AG04450 (cell line): ENCODE measurements at regions of chr1 and their contacts with region 1.

Region 1: DNA sequence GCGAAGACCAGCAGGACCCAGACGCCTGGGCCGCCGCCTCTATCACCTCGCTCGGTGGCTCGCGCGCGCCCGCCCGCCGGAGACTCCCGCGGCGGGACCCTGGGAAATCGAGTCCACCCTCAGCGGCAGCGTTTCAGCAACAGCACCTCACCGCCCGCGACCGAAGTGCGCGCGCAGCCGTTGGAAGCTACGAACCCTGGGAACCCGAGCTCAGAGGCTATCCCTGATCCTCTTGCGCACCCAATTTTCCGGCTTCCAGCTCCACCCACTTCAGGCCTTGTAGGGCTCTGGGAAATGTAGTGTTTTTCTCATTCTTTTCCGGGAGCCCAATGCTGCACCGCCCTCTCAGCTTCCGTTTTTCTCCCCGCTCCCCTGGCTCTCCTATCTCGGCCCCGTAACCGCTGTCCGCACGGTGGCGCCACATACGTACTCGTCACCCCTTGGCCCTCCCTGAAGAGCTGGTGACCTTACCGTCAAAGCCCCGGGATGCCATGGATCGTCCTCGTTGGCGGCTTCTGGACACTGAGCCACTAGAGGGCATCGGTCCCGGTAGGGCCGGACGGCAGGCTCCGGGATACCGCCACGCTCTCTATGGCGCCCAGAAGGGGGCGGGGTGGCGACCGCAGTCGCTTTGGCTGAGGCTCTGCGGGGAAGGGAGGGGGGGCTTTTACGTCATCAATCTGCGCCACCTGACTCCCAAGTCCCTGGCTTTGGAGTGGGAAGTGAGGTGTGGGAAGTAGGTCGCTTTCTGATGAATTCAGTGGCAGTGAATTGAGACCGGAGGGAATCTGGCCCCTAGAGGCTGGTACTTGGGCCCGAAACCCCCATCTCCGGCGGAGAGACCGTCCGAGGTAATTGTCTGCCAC is at the starts of genes ODR4 and TPR:
- DNase-seq: peak; percentile 99
- H3K4me3 ChIP-seq: peak within 1 kb of the TSS; percentile 86
- H3K27ac ChIP-seq: peak within 1 kb of the TSS; percentile 99
- H3K27me3 ChIP-seq: no peaks in the 10 kb centered on the region
- CTCF ChIP-seq: peak; percentile 89
- polyA plus RNA-seq, gene ODR4: 9.7 and 16.8 TPM in 2 replicates
- polyA plus RNA-seq, gene TPR: 47.6 and 48.5 TPM in 2 replicates

Region 2: GRCh38 chr1:186337554-186337953 is 37.8 kb before region 1 on chr1:
- CTCF ChIA-PET with region 1: interaction called, 24 read pairs
- POLR2A ChIA-PET with region 1: no interaction called
- DNase-seq: no peak
- H3K4me3 ChIP-seq: no peak overlapping the region
- H3K27ac ChIP-seq: no peak overlapping the region
- H3K27me3 ChIP-seq: no peaks in the 10 kb centered on the region
- CTCF ChIP-seq: no peak

Region 3: DNA sequence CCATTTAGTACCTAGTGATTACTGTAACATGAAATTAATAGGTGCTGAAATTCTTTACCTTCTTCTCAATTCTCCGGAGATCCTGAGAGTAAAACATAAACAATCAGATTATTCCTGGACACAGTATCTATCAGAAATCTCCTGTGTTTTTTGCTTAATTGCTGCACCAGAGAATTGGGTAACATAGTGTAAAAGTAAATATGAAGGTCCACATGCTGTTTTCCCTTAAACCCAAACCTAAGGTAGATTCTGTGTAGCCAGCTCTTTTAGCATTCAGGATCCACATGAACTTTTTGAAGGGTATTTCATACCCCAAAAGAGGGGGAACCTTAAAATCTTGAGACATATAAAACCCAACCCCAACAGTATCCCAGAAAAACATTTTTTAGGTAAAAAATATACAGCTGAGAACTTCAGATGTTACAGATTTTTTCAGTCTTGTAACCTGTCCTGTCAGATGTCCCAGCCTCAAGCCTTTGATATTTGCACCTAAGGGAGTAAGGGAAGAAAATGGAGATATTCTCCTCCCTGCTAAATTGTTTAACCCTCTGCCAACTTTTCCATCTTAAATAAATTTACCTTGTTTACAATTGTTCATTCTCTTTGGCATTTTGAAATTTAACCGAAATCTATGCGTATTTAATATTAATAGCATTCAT is 11.5 kb after region 1 on chr1:
- CTCF ChIA-PET with region 1: interaction called, 57 read pairs
- POLR2A ChIA-PET with region 1: interaction called, 10 read pairs
- DNase-seq: no peak
- H3K4me3 ChIP-seq: no peak overlapping the region
- H3K27ac ChIP-seq: no peak overlapping the region
- H3K27me3 ChIP-seq: no peaks in the 10 kb centered on the region
- CTCF ChIP-seq: no peak

Region 4: GRCh38 chr1:186404454-186405051 is 29.2 kb after region 1 on chr1:
- CTCF ChIA-PET with region 1: interaction called, 13 read pairs
- POLR2A ChIA-PET with region 1: no interaction called
- DNase-seq: peak; percentile 11
- H3K4me3 ChIP-seq: no peak overlapping the region
- H3K27ac ChIP-seq: no peak overlapping the region
- H3K27me3 ChIP-seq: no peaks in the 10 kb centered on the region
- CTCF ChIP-seq: peak; percentile 79

Region 5: DNA sequence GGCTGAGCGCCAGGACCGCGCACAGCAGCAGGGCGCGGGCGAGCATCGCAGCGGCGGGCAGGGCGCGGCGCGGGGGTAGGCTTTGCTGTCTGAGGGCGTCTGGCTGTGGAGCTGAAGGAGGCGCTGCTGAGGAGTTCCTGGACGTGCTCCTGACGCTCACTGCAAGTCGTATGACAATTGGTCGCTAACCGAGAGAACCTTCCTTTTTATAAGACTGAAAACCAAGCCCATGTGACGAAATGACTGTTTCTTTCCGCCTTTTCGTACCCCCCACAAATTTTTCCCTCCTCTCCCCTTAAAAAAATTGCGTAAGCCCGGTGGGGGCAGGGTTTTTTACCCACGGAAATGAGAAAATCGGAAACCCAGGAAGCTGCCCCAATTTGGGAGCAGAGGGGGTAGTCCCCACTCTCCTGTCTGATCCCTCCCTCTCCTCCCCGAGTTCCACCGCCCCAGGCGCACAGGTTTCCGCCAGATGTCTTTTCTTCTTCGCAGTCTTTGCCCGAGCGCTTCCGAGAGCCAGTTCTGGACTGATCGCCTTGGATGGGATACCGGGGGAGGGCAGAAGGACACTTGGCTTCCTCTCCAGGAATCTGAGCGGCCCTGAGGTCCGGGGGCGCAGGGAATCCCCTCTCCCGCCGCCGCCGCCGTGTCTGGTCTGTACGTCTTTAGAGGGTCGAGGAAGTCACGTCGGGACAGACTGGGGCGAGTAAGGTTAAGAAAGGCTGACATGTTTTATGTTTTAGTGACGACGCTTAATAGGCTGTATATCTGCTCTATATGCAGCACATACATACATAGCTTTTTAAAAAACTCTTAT is 305.1 kb after region 1 on chr1 and contains the start of gene PTGS2:
- CTCF ChIA-PET with region 1: interaction called, 16 read pairs
- POLR2A ChIA-PET with region 1: interaction called, 3 read pairs
- DNase-seq: peak; percentile 69
- H3K4me3 ChIP-seq: peak within 1 kb of the TSS; percentile 71
- H3K27ac ChIP-seq: peak within 1 kb of the TSS; percentile 71
- H3K27me3 ChIP-seq: no peaks in the 10 kb centered on the region
- CTCF ChIP-seq: peak; percentile 71
- polyA plus RNA-seq, gene PTGS2: 2.1 and 2.7 TPM in 2 replicates

Region 6: DNA sequence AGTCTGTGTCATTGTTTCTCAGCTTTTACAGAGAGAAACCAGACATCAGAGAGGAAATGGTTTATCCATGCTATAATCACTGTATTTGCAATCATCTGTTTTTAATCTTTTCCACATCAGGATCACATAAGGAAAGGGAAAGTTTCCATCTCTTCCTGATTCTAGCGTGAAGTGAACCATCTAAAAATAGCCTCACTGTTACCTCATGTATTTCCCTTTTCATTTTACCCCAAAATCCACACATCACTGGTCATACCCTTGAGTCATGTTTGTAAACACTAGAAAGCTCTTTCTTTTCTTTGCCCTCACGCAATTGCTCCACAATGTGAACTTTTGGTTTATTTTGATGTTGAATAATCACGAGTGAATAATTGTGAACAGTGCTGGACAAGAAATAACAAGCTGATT is 599.5 kb after region 1 on chr1:
- CTCF ChIA-PET with region 1: interaction called, 11 read pairs
- POLR2A ChIA-PET with region 1: no interaction called
- DNase-seq: peak; percentile 88
- H3K4me3 ChIP-seq: no peak overlapping the region
- H3K27ac ChIP-seq: no peak overlapping the region
- H3K27me3 ChIP-seq: no peaks in the 10 kb centered on the region
- CTCF ChIP-seq: no peak